ENCODE measurements at regions of chr9 and their contacts with region 1.

Region 1: GRCh38 chr9:29039258-29039657 is 1466.0 kb upstream of the C9orf72 start:
- DNase-seq: no peak
- ATAC-seq: no peak
- H3K4me3 ChIP-seq: no peak overlapping the region
- H3K27ac ChIP-seq: no peak overlapping the region
- H3K4me1 ChIP-seq: no peaks in the 10 kb centered on the region
- H3K27me3 ChIP-seq: no peaks in the 10 kb centered on the region
- CTCF ChIP-seq: no peak
- POLR2A ChIP-seq: no peak

Region 2: DNA sequence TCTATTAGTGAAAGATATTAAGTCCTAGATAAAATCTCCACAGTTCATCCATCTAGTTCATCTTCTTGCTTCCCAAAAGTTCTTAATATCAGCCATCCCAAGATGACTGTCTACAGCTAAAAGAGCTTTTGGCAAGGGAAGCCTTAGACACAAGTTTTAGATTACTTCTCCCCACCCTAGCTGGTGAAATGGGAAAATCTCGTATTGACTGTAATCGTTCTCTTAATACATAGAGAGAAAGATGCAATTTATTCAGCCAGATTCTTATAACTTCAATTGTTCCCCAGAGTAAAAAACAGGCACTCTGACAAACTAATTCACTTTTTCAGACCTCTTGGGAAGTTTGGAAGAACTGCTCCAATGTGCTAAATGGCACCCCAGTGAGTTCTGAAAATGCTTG is 26.3 kb before region 1 on chr9:
- intact Hi-C with region 1: loop called in 1 of 10 experiments (anchors 2 kb)
- DNase-seq: no peak
- ATAC-seq: no peak
- H3K4me3 ChIP-seq: no peak overlapping the region
- H3K27ac ChIP-seq: no peak overlapping the region
- H3K4me1 ChIP-seq: no peaks in the 10 kb centered on the region
- H3K27me3 ChIP-seq: no peaks in the 10 kb centered on the region
- CTCF ChIP-seq: no peak
- POLR2A ChIP-seq: no peak